Activated naive CD4-positive, alpha-beta T cell treated with anti-CD3 and anti-CD28 coated beads for 36 hours (primary cell): ENCODE measurements at regions of chr15 and their contacts with region 1.

Region 1: GRCh38 chr15:68875377-68876116 is 54.8 kb upstream of the SPESP1 start:
- DNase-seq: peak; percentile 96
- H3K4me3 Mint-ChIP-seq: peak overlapping the region; percentile 14
- H3K27ac Mint-ChIP-seq: no peak overlapping the region
- H3K4me1 Mint-ChIP-seq: no peaks in the 10 kb centered on the region
- H3K27me3 Mint-ChIP-seq: peaks cover 6% of the 10 kb centered on the region

Region 2: DNA sequence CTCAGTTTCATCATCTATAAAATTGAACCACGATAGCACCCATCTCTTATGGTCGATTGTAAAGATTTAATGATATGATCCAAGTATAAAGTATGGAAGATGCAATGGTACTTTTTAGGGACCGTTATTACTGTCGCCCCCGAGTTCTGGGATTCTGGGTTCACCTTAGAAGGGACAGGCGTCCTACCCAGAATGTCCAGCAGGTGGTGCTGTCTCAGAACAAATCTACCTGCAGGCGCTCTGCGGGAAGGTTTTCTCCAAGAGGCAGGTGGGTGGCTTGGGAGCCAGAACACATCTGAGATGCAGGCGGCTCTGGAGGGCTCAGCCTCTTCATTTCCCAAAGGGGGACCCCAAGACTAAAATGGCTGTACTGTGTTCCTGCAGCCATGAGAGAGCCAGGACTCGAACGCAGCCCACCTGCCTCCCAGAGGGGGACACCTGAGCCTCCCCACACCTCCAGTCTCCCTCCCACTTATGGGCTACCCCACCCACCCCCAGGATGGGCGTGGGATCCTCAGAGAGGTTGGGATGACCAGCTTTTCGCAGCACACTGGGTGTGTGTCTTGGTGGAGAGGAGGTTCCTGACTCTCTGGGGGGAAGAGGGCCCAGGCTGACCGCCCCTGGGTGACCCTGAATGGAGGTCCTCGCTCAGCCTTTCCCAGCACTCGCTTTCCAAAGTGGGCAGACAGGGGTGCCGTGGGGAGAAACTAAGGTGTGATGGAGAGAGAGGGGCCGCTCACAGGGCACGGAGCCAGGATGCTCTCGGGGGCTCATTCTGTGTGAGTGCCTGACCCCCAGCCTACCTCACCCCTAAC is 324.9 kb before region 1 on chr15:
- CTCF ChIA-PET with region 1: interaction called, 40 read pairs
- intact Hi-C with region 1: loop called (anchors 1 kb)
- DNase-seq: peak; percentile 88
- H3K4me3 Mint-ChIP-seq: no peak overlapping the region
- H3K27ac Mint-ChIP-seq: no peak overlapping the region
- H3K4me1 Mint-ChIP-seq: peaks cover 6% of the 10 kb centered on the region
- H3K27me3 Mint-ChIP-seq: peaks cover 33% of the 10 kb centered on the region

Region 3: DNA sequence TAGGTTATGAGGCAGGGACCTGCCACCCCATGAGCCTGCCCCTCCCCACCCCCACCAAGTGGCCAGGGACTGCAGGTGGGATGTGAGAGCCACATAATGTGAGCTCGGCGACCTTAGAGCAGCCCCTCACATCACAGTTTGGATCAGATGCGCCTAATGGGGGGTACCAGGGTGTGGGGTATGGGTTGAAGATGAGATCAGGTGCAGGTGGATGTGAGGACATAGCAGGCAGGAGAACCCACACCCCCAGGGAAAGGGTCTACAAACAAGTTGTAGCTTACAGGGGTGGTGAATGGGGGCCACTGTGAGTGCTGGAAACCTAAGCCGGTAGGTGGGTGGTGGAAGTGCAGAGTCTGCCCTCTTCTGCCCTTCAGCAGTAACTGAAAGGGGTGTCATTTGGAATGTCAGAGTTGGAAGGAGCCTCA is 202.8 kb before region 1 on chr15:
- CTCF ChIA-PET with region 1: interaction called, 21 read pairs
- intact Hi-C with region 1: loop called (anchors 2 kb)
- DNase-seq: no peak
- H3K4me3 Mint-ChIP-seq: no peak overlapping the region
- H3K27ac Mint-ChIP-seq: no peak overlapping the region
- H3K4me1 Mint-ChIP-seq: peaks cover 3% of the 10 kb centered on the region
- H3K27me3 Mint-ChIP-seq: peaks cover 11% of the 10 kb centered on the region

Region 4: DNA sequence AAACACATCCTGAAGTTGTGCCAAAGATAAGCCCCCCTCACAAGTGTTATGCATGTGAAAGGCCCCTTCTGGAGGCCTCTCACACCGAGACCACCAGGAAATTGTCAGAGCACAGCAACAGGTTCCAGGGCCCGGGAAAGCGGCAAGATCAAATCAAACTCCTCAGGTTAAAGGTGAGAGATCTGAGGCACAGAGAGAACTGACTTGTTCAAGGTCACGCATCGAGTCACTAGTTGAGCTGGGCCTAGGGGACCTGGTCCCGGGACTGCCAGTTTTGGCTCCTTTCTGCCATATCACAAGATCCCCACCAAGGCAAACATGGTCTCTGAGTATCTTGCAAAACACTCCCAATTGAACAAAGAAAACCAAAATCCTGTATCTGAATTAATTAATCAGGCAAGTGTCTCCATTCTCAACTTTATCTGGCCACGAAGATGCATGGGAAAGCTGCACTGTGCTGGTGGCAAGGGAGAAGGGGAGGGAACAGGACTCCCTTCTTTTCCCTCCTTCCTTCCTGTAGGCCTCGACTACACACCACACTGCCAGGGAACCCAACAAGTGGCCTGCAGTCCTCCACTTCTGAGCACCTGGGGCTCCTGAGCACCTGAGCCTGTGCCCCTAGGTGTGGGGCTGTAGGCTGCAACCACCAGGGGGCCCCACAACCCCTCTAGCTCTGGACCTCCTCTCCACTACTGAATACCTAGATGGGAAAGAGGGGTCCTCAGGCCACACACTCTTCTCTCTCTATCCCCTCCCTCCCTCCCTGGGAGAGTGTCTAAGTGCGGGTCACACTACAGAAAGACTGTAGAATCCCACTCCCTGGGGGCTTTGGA is 92.1 kb before region 1 on chr15:
- CTCF ChIA-PET with region 1: interaction called, 28 read pairs
- intact Hi-C with region 1: loop called (anchors 1 kb)
- DNase-seq: peak; percentile 71
- H3K4me3 Mint-ChIP-seq: no peak overlapping the region
- H3K27ac Mint-ChIP-seq: peak overlapping the region; percentile 81
- H3K4me1 Mint-ChIP-seq: peaks cover 39% of the 10 kb centered on the region
- H3K27me3 Mint-ChIP-seq: no peaks in the 10 kb centered on the region

Region 5: GRCh38 chr15:68807249-68807648 is 68.3 kb before region 1 on chr15:
- CTCF ChIA-PET with region 1: no interaction called
- intact Hi-C with region 1: no loop called
- DNase-seq: no peak
- H3K4me3 Mint-ChIP-seq: no peak overlapping the region
- H3K27ac Mint-ChIP-seq: no peak overlapping the region
- H3K4me1 Mint-ChIP-seq: peaks cover 81% of the 10 kb centered on the region
- H3K27me3 Mint-ChIP-seq: no peaks in the 10 kb centered on the region

Region 6: GRCh38 chr15:68924866-68925560 is 49.5 kb after region 1 on chr15:
- CTCF ChIA-PET with region 1: interaction called, 9 read pairs
- intact Hi-C with region 1: loop called (anchors 1 kb)
- DNase-seq: peak; percentile 85
- H3K4me3 Mint-ChIP-seq: no peak overlapping the region
- H3K27ac Mint-ChIP-seq: no peak overlapping the region
- H3K4me1 Mint-ChIP-seq: no peaks in the 10 kb centered on the region
- H3K27me3 Mint-ChIP-seq: peaks cover 24% of the 10 kb centered on the region

Region 7: DNA sequence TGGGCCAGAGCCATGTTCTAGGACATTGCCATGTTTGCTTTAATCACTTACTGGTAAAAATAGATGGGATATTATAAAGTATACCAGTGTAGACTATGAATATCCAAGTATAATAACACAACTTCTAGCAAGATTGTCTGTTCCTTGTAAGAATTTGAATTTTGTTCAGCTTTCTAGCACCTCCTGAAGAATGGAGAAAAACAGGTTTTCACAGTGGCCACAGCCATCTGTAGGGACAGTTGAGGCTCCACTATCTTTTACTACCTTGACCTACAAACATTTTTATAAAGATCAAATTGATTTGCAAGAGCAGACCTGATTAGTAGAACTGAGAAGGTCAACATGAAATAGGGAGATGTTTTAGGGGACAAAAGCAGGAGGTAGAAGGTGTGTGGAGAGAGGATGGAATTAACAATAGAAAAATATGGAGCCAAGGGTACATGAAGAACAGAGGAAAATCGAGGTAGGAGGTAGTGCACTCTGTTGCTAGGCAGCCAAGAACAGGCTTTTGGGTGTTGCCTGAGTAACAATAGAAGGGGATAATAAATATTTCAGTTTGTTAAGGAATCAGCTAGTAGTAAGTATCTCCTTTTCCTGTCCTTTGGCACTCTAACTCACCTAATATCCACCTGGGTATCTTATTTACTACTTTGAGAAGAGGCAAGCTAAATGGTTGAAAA is 63.8 kb after region 1 on chr15:
- CTCF ChIA-PET with region 1: no interaction called
- intact Hi-C with region 1: no loop called
- DNase-seq: no peak
- H3K4me3 Mint-ChIP-seq: no peak overlapping the region
- H3K27ac Mint-ChIP-seq: no peak overlapping the region
- H3K4me1 Mint-ChIP-seq: no peaks in the 10 kb centered on the region
- H3K27me3 Mint-ChIP-seq: peaks cover 13% of the 10 kb centered on the region